ENCODE measurements at regions of chr12 and their contacts with region 1.

Region 1: GRCh38 chr12:112978163-112979040 is at the start of gene OAS2:
- DNase-seq: peak; percentile 23 to 78
- ATAC-seq: peak; percentile 91 to 96 (median 95)
- H3K4me3 ChIP-seq: peak within 1 kb of the TSS; percentile 20 to 70 (median 62)
- H3K27ac ChIP-seq: peak within 1 kb of the TSS; percentile 68 to 94 (median 88)
- H3K4me1 ChIP-seq: peaks cover 0 to 39% (median 11%) of the 10 kb centered on the region in 9 donors
- H3K27me3 ChIP-seq: no peaks in the 10 kb centered on the region
- CTCF ChIP-seq: no peak
- total RNA-seq, gene OAS2: 5.3 to 24.2 (median 9.4) TPM

Region 2: DNA sequence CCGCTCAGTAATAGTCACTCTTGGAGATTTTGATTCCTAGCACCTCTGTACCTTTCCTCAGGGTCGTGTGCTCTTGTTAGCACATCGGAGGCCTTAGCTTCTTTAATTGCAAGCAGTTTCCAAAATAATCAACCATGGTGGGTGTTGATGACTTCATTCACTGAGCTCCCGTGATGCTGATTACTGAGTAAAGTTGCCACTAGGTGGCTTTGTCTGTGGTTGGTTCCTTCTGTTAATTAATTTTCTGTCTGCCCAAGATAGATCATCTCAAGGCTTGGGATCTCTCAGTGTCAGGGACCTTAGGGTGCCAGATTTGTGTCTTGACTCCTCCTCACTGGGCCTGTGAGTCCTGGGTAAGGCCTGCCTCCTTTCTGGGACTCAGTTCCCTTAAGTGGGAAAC is 505.3 kb before region 1 on chr12:
- intact Hi-C with region 1: no loop called
- DNase-seq: no peak
- ATAC-seq: no peak
- H3K4me3 ChIP-seq: no peak overlapping the region
- H3K27ac ChIP-seq: no peak overlapping the region
- H3K4me1 ChIP-seq: peaks cover 0 to 10% (median 0%) of the 10 kb centered on the region in 9 donors
- H3K27me3 ChIP-seq: no peaks in the 10 kb centered on the region
- CTCF ChIP-seq: no peak

Region 3: DNA sequence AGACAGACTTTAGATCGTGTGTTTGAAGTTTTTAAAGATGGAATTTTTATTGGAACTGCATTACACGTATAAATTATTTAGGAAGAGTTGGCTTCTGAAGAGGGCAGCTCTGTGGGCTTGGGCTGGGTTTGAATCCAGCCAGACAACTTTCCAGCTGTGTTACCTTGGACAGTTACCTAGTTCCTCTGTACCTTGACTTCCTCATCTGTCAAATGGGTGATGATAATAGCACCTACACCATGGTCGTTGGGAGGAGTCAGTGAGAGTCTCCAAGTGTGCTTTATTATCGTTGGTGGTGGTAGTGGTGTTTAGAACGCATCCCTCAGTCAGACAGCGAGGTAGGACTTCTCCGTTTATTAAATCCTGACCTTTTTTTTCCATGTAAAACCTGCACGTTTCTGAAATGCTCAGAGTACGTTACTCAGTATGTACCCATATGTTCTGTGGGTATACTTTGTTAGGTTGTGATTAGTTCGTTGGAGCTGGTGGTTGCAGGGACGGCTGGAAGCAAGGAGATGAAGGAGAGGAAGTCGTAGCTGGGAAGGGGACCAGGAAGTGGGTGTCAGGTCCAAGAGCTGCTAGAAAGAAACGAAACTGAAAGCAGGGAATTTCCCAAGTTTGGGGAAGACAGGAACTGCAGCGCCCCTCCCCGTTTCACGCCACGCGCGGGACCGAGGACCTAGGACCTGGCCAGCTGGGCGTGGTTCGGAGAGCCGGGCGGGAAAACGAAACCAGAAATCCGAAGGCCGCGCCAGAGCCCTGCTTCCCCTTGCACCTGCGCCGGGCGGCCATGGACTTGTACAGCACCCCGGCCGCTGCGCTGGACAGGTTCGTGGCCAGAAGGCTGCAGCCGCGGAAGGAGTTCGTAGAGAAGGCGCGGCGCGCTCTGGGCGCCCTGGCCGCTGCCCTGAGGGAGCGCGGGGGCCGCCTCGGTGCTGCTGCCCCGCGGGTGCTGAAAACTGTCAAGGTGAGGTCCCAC is 40.4 kb before region 1 on chr12 and contains the start of gene OAS3:
- intact Hi-C with region 1: loop called in 2 of 10 experiments (anchors 2 to 5 kb)
- DNase-seq: peak; percentile 88 to 92
- ATAC-seq: peak; percentile 92 to 98 (median 96)
- H3K4me3 ChIP-seq: peak within 1 kb of the TSS; percentile 53 to 88 (median 66)
- H3K27ac ChIP-seq: peak within 1 kb of the TSS; percentile 67 to 92 (median 81)
- H3K4me1 ChIP-seq: peaks cover 4 to 27% (median 14%) of the 10 kb centered on the region in 9 donors
- H3K27me3 ChIP-seq: peaks cover 0 to 4% (median 0%) of the 10 kb centered on the region in 7 donors
- CTCF ChIP-seq: no peak
- total RNA-seq, gene OAS3: 5.9 to 28.0 (median 10.5) TPM